Head of caudate nucleus (tissue), 42 donors: ENCODE measurements at regions of chr20 and their contacts with region 1.

Region 1: DNA sequence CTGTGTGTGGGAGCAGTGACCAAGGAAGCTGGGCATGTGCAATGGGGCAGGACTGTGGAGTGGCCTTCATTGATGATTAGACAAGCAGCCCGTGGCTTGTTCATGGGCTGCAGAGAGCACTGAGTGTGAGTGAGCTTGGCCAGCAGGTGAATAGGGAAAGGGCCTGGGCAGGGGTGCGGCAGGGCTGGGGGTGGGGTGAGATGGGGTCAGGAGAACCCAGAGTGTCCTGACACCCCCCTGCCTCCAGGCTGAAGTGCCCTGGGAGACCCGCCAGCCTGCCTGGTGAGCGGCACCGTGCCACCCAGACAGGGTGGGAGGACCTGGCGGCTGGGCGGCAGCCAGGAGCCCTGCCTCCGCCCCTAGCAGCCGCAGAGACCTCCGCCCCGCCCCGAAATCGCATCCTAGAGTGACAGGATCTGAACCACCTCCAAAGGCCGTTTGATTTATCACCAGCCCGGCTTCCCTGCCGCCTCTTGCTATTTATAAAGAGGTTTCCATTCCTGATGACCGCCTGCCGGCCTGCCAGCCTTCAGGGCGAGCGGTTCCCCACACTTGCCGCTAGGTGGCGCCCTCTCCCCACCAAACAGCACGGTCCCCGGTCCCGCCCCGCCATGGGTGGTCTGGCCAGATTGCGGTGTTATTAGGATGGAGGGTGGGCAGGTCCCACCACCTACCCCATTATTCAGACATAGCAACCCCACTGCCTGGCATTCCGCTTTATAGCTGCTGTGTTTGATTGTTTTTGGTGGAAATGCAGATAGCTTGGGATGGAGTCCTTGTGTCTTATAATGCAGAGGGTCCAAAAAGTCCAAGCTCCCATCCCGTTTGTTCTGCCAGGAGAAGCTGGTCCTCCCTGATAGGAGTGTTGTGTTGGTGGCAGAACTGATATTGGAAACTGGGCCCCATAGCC is 3.5 kb downstream of the MYLK2 start:
- DNase-seq: peak; percentile 52 to 92 (median 80)

Region 2: DNA sequence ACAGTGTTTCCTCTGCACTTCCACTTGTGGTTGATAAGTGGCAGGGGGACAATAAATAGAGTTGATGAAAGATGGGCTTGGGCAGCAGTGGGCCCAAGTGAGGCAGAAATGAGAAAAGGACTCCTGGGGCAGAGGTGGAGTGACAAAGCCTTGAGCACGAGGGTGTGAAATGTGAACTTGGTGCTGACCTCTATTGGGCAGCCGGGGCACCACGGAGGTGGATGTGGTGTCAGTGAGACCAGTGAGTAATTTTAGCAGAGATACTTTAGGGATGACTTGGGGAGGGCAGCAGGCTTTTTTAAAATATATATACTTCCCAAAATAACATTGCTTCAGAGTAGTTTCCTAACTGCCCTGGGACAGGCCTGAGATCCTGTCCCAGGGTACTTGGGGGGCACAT is 34.1 kb before region 1 on chr20:
- intact Hi-C with region 1: no loop called
- DNase-seq: no peak

Region 3: DNA sequence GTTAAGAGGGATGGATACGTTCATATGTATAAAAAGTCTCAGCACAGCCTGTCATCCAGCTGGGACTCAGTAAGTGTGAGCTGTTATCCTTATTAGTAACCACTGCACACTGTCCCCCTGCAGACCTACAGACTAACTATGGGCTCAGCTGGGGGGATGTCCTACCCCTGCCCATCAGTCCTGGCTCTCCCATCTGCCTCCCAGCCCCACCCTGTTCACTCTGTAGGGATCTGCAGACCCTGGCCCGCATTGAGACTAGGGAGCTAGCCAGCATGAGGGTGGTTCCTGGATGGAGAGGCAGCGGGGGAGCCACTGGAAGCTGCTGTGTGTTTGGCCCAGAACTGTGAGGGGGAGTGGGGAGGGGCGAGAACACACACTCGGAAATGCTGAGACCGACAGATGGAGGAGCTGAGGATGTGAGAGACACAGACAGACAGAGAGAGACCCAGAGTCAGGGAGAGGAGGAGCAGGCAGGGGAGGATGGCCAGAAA is 162.3 kb after region 1 on chr20:
- intact Hi-C with region 1: no loop called
- DNase-seq: no peak

Region 4: GRCh38 chr20:32031007-32031958 is 208.6 kb after region 1 on chr20:
- intact Hi-C with region 1: loop called (anchors 5 kb)
- DNase-seq: peak; percentile 48 to 88 (median 76)

Region 5: DNA sequence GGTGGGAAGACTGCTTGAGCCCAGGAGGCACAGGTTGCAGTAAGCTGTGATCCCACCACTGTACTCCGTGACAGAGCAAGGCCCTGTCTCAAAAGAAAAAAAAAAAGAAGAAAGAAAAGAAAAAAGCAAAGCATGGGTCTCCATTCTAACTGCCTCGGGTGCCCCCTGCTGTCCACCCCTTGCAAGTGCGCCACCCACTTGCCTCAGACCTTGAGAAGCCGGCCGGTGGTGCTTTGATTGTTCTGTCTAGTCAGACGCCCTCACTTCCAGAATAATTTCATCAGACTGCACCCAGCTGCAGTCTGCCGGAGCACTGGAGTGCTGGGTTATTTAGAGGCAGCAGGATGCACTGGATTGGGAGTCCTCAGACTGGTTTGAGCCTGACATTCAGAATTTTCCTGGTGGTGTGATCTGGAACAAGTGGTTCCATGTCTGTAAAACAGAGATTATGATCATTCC is 269.2 kb after region 1 on chr20:
- intact Hi-C with region 1: loop called (anchors 10 kb)
- DNase-seq: peak; percentile 60 to 91 (median 82)